ENCODE measurements at regions of chr22 and their contacts with region 1.

Region 1: DNA sequence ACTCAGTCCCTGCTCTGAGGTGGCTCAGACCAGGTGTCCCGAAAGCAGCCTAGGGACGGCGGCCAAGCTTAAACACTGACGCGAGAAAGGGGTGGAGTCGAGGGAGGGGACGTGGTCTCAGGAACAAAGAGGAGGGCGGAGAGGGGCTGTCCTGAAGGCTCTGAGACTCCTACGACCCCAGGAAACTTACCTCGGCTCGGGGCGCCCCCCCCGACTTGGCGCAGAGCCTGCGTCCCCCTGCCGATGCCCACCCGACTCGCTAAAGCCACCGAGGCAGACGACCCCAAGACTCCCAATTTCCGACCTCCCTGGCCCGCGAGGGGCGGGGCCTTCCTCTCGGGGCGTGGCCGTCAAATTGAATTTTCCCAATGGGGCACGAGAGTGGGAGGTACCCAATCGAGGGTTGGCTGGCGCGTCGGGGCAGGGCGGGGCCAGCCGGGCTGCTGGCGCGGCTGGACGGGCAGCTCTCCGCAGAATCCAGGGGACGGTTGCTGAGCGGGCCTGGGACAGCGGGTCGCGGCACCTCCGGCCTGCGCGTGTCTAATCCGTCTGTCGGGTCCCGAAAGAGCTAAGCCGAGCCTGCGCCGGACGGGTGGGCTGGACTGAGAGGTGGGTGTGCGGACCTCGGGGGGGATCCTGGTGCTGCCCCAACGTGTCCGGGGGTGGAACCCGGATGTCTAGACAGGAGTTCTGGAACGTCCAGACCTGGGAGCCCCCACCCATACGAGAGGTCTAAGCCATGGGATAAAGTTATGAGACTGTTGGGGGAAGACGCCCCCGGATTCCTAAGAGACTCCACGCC is at the start of gene SMTN:
- DNase-seq: peak; percentile 94 to 97 (median 96)
- H3K4me3 ChIP-seq: peak within 1 kb of the TSS; percentile 88
- H3K27ac ChIP-seq: peak within 1 kb of the TSS; percentile 42 to 68
- H3K4me1 ChIP-seq: peaks cover 15% of the 10 kb centered on the region
- H3K27me3 ChIP-seq: no peaks in the 10 kb centered on the region
- CTCF ChIP-seq: no peak
- EP300 ChIP-seq: no peak
- POLR2A ChIP-seq: peak; percentile 95
- total RNA-seq, gene SMTN: 39.9 to 238 (median 87.6) TPM

Region 2: GRCh38 chr22:30649430-30650007 is 431.5 kb before region 1 on chr22:
- intact Hi-C with region 1: loop called in 1 of 4 experiments (anchors 10 kb)
- DNase-seq: peak in 1 of 5 donors; percentile 27
- H3K4me3 ChIP-seq: no peak overlapping the region
- H3K27ac ChIP-seq: no peak overlapping the region
- H3K4me1 ChIP-seq: no peaks in the 10 kb centered on the region
- H3K27me3 ChIP-seq: no peaks in the 10 kb centered on the region
- CTCF ChIP-seq: no peak
- EP300 ChIP-seq: no peak
- POLR2A ChIP-seq: no peak

Region 3: GRCh38 chr22:30947816-30948454 is 133.1 kb before region 1 on chr22:
- intact Hi-C with region 1: loop called (anchors 2 to 5 kb)
- DNase-seq: no peak
- H3K4me3 ChIP-seq: no peak overlapping the region
- H3K27ac ChIP-seq: no peak overlapping the region
- H3K4me1 ChIP-seq: no peaks in the 10 kb centered on the region
- H3K27me3 ChIP-seq: no peaks in the 10 kb centered on the region
- CTCF ChIP-seq: peak; percentile 22 to 78 (median 68)
- EP300 ChIP-seq: no peak
- POLR2A ChIP-seq: no peak

Region 4: DNA sequence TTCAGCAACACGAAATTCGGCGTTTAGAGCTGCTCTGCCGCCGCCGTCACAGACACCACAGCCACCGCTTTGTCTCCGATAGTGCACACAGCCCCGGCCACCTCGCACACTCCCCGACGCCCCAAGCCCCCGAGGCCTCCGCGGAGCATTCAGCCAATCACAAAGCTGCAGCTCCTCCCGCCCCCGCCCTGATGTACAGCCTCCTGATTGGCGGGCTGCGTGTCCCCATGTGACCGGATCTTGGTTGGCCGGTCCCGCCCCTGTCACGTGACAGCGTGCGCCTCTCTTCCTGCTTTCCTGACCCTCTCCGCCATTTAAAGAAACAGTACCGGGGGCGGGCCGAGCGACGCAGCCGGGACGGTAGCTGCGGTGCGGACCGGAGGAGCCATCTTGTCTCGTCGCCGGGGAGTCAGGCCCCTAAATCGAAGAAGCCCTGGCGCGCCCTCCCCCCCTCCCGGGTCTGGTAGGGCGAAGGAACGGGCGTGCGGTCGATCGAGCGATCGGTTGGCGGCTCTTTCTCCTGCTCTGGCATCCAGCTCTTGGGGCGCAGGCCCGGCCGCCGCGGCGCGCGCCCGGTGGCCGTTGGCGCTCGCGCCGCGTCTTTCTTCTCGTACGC is 112.0 kb before region 1 on chr22 and contains the start of gene TUG1:
- intact Hi-C with region 1: loop called in 3 of 4 experiments (anchors 5 kb)
- DNase-seq: peak; percentile 98 to 99 (median 98)
- H3K4me3 ChIP-seq: peak within 1 kb of the TSS; percentile 89
- H3K27ac ChIP-seq: peak within 1 kb of the TSS; percentile 85 to 88
- H3K4me1 ChIP-seq: peaks cover 3% of the 10 kb centered on the region
- H3K27me3 ChIP-seq: no peaks in the 10 kb centered on the region
- CTCF ChIP-seq: peak in 1 of 3 donors; percentile 8
- EP300 ChIP-seq: no peak
- POLR2A ChIP-seq: peak; percentile 76
- total RNA-seq, gene TUG1: 71.8 to 101 (median 78.7) TPM

Region 5: GRCh38 chr22:31036671-31037550 is 44.1 kb before region 1 on chr22:
- intact Hi-C with region 1: loop called in 1 of 4 experiments (anchors 5 kb)
- DNase-seq: peak in 2 of 5 donors; percentile 31 to 46
- H3K4me3 ChIP-seq: no peak overlapping the region
- H3K27ac ChIP-seq: peak overlapping the region in 1 of 2 donors; percentile 6
- H3K4me1 ChIP-seq: peaks cover 12% of the 10 kb centered on the region
- H3K27me3 ChIP-seq: no peaks in the 10 kb centered on the region
- CTCF ChIP-seq: no peak
- EP300 ChIP-seq: no peak
- POLR2A ChIP-seq: no peak

Region 6: DNA sequence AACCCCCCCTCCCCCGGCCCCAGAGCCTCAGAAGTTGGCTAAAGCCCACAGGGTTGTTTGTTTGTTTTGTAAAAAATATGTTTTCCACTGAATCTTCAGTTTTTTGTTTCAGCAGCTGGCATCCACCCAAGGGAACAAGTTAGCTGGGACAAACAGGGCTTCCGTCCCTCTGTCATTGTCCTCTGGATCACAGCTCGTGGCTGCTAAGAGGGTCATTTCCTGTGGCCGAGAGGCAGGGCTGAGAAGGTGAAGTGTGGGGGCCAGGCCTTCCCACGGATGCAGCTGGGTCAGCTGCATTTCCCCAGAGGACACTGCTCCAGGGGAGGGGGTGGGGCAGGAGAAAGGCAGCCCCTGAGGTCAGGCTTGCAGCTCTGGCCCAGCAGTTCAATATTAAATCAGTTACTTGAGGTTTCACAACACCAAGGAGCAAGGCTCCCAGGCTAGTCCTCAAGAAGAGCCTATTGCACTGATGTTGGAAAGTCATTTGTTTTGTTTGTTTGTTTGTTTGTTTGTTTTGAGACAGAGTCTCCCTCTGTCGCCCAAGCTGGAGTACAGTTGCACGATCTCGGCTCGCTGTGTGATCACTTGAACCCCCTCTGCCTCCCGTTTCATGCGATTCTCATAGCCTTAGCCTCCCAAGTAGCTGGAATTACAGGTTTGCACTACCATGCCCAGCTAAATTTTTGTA is 34.4 kb before region 1 on chr22:
- intact Hi-C with region 1: loop called in 1 of 4 experiments (anchors 2 kb)
- DNase-seq: peak; percentile 62 to 76 (median 69)
- H3K4me3 ChIP-seq: no peak overlapping the region
- H3K27ac ChIP-seq: peak overlapping the region; percentile 12 to 25
- H3K4me1 ChIP-seq: peaks cover 21% of the 10 kb centered on the region
- H3K27me3 ChIP-seq: no peaks in the 10 kb centered on the region
- CTCF ChIP-seq: no peak
- EP300 ChIP-seq: no peak
- POLR2A ChIP-seq: no peak

Region 7: GRCh38 chr22:31148953-31149627 is 68.0 kb after region 1 on chr22:
- intact Hi-C with region 1: loop called in 1 of 4 experiments (anchors 5 kb)
- DNase-seq: peak; percentile 70 to 77 (median 72)
- H3K4me3 ChIP-seq: no peak overlapping the region
- H3K27ac ChIP-seq: no peak overlapping the region
- H3K4me1 ChIP-seq: no peaks in the 10 kb centered on the region
- H3K27me3 ChIP-seq: no peaks in the 10 kb centered on the region
- CTCF ChIP-seq: peak; percentile 61 to 84 (median 62)
- EP300 ChIP-seq: no peak
- POLR2A ChIP-seq: no peak